ENCODE measurements at regions of chr21 and their contacts with region 1.

Region 1: DNA sequence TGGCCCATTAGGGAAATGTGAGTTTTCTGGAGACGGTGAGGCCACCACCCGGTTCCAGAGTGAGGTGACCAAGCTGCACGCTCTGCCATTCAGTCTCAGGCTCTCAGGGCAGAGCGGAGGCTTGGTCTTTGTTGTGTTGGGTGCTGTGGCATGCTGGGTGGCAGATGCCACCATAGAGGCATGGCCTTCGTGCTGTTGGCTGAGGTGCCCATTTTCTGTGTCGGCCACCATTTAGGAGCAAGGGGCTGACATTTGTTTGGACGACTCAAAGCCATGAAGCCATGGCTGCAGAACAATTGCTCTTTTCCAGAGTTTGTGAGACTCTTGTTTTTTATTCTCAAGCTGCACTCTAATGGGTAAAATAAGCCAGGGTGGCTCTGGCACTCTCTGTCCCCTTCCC is 36.8 kb upstream of the PWP2 start:
- DNase-seq: no peak
- ATAC-seq: no peak
- H3K4me3 ChIP-seq: no peak overlapping the region
- H3K27ac ChIP-seq: no peak overlapping the region
- H3K4me1 ChIP-seq: no peaks in the 10 kb centered on the region
- H3K27me3 ChIP-seq: no peaks in the 10 kb centered on the region
- CTCF ChIP-seq: no peak

Region 2: GRCh38 chr21:43929217-43930025 is 141.0 kb before region 1 on chr21:
- CTCF ChIA-PET with region 1: no interaction called
- POLR2A ChIA-PET with region 1: no interaction called
- intact Hi-C with region 1: no loop called
- DNase-seq: no peak
- ATAC-seq: no peak
- H3K4me3 ChIP-seq: no peak overlapping the region
- H3K27ac ChIP-seq: no peak overlapping the region
- H3K4me1 ChIP-seq: no peaks in the 10 kb centered on the region
- H3K27me3 ChIP-seq: no peaks in the 10 kb centered on the region
- CTCF ChIP-seq: no peak

Region 3: DNA sequence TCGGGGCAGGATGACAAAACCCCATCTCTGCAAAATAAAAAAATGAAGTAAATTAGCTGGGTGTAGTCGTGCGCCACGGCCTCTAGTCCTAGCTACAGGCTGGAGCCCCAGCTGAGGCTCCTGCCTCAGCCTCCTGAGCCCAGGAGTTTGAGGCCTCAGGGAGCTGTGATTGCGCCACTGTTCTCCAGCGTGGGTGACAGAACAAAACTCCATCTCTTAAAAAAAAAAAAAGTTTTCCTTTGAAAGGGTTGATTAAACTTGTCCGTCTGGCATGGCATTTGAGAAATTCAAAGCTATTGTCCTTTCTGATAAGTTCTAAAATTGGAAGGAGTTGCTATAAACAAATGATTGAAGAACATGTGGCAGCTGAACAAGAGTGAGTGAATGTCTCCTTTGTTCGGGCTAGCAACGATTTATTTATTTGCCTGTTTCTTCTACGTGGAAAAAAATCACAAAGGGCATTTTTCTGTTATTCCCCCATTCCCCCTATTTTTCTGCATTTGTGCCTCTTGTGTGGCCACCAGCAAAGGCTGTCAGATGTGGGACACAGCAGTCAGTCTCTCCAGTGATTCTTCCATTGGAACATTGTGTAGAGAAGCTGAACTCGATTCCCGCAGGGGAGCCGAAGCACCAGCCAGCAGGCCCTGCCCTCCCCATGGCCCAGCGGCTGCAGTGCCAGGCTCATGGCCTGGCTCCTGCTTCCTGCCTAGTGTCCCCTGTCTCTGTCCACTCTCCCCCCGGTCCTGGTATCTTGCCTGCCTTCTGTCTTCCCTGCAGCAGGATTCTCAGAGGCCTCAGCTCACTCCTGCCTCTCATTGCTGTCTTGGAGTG is 15.3 kb after region 1 on chr21:
- CTCF ChIA-PET with region 1: no interaction called
- POLR2A ChIA-PET with region 1: interaction called, 14 read pairs
- intact Hi-C with region 1: no loop called
- DNase-seq: no peak
- ATAC-seq: no peak
- H3K4me3 ChIP-seq: no peak overlapping the region
- H3K27ac ChIP-seq: no peak overlapping the region
- H3K4me1 ChIP-seq: no peaks in the 10 kb centered on the region
- H3K27me3 ChIP-seq: no peaks in the 10 kb centered on the region
- CTCF ChIP-seq: no peak

Region 4: DNA sequence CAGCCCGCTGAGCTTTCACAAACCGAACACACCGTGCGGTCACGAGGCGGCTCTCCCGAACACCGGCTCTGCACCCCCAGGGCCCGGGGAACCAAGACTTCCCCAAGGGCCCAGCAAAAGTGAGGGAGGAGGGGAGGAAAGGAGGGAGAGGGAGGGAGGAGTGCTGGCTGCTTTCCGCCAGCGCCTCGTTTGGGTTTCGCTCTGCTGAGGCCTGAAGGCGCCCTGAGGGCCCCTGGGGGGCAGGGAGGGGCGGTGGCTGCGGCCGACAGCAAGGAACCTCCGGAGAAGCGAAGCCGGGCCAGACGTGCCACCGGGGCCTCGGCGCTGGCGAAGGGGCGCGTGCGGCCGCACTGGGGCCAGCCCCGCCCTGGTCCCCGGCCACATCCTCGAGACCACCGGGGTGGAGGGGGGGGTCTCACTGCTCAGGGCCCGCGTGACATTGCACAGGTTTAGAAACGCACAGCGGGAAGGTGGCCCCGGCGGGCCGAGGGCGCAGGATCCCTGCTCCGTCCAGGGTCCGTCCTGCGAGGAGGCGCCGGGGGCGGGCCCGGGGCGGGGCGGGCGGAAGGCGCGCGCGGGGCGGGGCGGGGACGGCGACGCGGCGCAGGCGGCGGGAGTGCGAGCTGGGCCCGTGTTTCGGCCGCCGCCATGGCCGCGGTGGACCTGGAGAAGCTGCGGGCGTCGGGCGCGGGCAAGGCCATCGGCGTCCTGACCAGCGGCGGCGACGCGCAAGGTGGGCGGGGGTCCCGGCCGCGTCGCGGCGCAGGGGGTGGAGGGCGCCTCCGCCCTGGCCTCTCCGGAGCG is 229.3 kb after region 1 on chr21 and contains the start of gene PFKL:
- CTCF ChIA-PET with region 1: no interaction called
- POLR2A ChIA-PET with region 1: no interaction called
- intact Hi-C with region 1: no loop called
- DNase-seq: peak; percentile 61
- ATAC-seq: peak; percentile 74
- H3K4me3 ChIP-seq: peak within 1 kb of the TSS; percentile 85
- H3K27ac ChIP-seq: peak within 1 kb of the TSS; percentile 46
- H3K4me1 ChIP-seq: peaks cover 36% of the 10 kb centered on the region
- H3K27me3 ChIP-seq: no peaks in the 10 kb centered on the region
- CTCF ChIP-seq: no peak
- total RNA-seq, gene PFKL: 223 and 250 TPM in 2 replicates